ENCODE measurements at regions of chr4 and their contacts with region 1.

Region 1: DNA sequence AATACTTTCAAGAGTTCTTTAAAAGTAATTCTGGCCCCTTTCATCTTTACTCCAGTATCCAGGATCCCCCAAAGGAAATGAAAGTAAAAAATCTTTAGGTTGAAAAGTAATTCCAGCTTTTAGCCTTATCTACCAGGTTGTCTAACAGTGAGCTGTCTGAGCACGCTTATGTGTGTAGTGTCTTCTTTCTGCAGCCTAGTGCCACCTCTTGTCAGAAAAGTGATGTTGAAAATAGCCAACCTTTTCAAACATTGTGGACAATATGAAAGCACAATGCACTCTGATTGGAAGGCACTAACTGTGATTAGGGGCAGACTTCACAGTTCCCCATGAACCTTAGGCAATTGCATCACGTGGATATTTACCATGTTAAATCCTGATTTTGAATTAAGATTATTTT is 92.1 kb downstream of the RELL1 start:
- DNase-seq: no peak
- CTCF ChIP-seq: no peak

Region 2: GRCh38 chr4:37338983-37339382 is 255.1 kb before region 1 on chr4:
- in situ Hi-C with region 1: no loop called
- DNase-seq: no peak
- CTCF ChIP-seq: no peak

Region 3: GRCh38 chr4:37770016-37770415 is 175.9 kb after region 1 on chr4:
- in situ Hi-C with region 1: loop called (anchors 10 kb)
- DNase-seq: no peak
- CTCF ChIP-seq: no peak

Region 4: GRCh38 chr4:38046728-38047489 is 452.8 kb after region 1 on chr4:
- in situ Hi-C with region 1: no loop called
- DNase-seq: no peak
- CTCF ChIP-seq: no peak

Measured in GM13977 (cell line).